Activated CD4-positive, alpha-beta memory T cell treated with anti-CD3 and anti-CD28 coated beads, Interleukin-2, amount 10 ng/mL, durations not matched to agents 7 days and 5 days (primary cell): ENCODE measurements at regions of chr1 and their contacts with region 1.

Region 1: DNA sequence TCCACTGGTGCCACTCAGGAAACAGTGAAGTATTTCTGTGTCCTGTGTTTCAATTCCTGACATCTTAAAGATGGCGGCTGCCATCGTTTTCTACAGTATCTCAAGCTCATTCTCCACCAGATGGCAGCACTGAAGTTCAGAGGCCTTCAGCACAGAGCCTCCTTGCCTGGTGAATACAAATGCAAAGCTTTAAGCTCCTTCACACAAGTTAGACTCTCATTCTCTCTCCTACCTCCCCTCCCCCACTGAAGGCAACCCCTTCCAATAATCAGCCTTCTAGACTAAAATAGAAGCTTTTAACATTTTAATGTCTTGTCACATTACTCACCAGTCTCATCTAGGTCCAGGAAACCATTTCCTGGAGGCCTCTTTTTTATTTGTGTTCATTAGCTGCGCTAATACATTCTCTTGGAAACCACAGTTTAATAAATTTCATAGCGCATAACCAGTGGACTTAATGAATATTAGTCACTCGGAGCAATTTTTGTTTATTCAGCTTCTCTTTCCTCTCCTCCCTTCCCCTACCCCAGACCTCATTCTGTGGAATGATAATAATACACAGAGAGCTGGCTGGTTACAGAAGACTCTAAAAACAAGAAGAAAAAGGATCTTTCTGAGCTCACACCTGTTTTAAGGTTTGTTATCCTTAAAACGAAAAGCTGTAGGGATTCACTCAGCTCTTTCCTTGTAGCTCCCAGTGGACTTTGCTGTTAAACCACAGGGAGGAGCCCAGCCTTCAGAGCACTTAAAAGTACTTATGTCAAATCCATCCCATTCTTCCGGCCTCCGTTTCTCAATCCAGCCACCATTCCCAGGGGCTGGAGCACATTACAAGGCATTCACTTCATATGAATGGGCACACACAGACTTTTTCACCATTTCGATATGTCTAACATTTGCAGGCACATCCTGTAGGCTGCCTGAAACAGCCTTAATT is 384.9 kb downstream of the HLX start:
- DNase-seq: peak; percentile 42
- H3K4me3 Mint-ChIP-seq: no peak overlapping the region
- H3K27ac Mint-ChIP-seq: no peak overlapping the region
- H3K4me1 Mint-ChIP-seq: no peaks in the 10 kb centered on the region
- H3K27me3 Mint-ChIP-seq: peaks cover 4% of the 10 kb centered on the region

Region 2: DNA sequence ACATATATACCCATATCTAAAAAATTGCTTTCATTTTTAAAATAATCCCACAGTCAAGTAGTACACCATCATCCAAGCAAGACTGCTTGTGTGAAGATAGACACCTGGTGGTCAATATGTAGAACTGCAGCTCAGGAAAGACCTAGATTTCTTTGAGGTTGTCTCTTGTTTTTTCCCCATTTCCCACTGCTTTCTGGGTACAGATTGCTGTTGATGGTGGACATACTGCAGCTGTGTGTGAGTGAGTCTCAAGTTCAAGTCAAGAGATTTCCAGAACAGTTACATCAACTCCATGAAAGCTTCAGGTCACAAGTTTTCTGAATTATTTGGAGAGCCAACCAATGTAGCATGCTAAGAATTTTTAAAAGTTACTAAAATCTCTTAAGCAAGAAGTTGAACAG is 171.4 kb after region 1 on chr1:
- CTCF ChIA-PET with region 1: interaction called, 30 read pairs
- POLR2A ChIA-PET with region 1: interaction called, 4 read pairs
- DNase-seq: no peak
- H3K4me3 Mint-ChIP-seq: no peak overlapping the region
- H3K27ac Mint-ChIP-seq: no peak overlapping the region
- H3K4me1 Mint-ChIP-seq: peaks cover 32% of the 10 kb centered on the region
- H3K27me3 Mint-ChIP-seq: no peaks in the 10 kb centered on the region

Region 3: DNA sequence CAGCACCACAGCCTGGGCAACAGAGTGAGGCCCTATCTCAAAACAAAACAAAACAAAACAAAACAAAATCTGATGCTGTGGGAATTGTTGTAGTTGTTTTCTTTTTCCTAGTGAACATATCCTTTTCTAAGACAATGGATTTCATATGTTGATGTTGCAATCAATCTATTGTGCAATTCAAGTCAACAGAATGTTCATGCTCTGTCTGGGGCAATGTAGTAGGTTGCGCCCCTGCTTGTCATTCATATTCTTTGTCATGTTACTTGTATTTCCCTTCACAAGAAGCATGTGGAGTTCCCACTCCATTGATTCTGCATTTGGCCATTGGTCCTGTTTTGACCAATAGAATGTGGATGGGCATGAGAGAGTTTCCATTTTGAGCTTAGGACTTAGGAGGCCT is 253.9 kb after region 1 on chr1:
- CTCF ChIA-PET with region 1: no interaction called
- POLR2A ChIA-PET with region 1: no interaction called
- DNase-seq: no peak
- H3K4me3 Mint-ChIP-seq: no peak overlapping the region
- H3K27ac Mint-ChIP-seq: no peak overlapping the region
- H3K4me1 Mint-ChIP-seq: peaks cover 10% of the 10 kb centered on the region
- H3K27me3 Mint-ChIP-seq: no peaks in the 10 kb centered on the region